Activated naive CD4-positive, alpha-beta T cell treated with anti-CD3 and anti-CD28 coated beads for 36 hours (primary cell): ENCODE measurements at regions of chr19 and their contacts with region 1.

Region 1: GRCh38 chr19:46542428-46543230 is 47.0 kb upstream of the PNMA8B start:
- DNase-seq: peak; percentile 92
- H3K4me3 Mint-ChIP-seq: no peak overlapping the region
- H3K27ac Mint-ChIP-seq: no peak overlapping the region
- H3K4me1 Mint-ChIP-seq: peaks cover 11% of the 10 kb centered on the region
- H3K27me3 Mint-ChIP-seq: no peaks in the 10 kb centered on the region

Region 2: DNA sequence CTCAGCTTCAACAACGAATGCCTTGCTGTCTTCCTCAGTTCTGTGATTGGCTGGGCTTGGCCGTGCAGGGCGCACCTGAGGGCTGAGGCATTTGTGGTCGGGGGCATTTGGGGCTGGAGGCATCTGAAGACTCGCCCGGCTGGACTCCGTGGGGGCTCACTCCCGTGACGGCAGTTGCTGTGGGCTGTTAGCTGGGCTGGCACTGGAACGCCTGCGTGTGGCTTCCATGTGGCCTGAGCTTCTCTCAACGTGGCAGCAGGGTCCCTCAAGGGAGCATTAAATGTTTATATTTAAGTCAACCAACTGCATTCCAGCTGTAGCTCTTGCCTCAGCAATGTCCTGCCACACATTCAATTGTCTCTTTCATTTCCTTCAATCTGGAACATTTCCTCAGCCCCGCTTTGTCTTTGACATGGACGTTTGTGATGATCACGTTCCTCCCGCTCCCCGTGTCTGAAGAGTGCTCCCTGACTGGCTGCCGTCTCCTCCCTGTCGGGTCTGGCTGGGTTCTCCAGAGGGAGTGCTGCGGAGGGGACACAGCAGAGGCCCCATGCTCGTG is 150.3 kb before region 1 on chr19:
- CTCF ChIA-PET with region 1: interaction called, 4 read pairs
- intact Hi-C with region 1: loop called (anchors 2 kb)
- DNase-seq: no peak
- H3K4me3 Mint-ChIP-seq: no peak overlapping the region
- H3K27ac Mint-ChIP-seq: no peak overlapping the region
- H3K4me1 Mint-ChIP-seq: peaks cover 1% of the 10 kb centered on the region
- H3K27me3 Mint-ChIP-seq: no peaks in the 10 kb centered on the region

Region 3: GRCh38 chr19:46404055-46404752 is 138.4 kb before region 1 on chr19:
- CTCF ChIA-PET with region 1: interaction called, 3 read pairs
- intact Hi-C with region 1: loop called (anchors 2 kb)
- DNase-seq: no peak
- H3K4me3 Mint-ChIP-seq: peak overlapping the region; percentile 54
- H3K27ac Mint-ChIP-seq: no peak overlapping the region
- H3K4me1 Mint-ChIP-seq: peaks cover 17% of the 10 kb centered on the region
- H3K27me3 Mint-ChIP-seq: peaks cover 63% of the 10 kb centered on the region

Region 4: DNA sequence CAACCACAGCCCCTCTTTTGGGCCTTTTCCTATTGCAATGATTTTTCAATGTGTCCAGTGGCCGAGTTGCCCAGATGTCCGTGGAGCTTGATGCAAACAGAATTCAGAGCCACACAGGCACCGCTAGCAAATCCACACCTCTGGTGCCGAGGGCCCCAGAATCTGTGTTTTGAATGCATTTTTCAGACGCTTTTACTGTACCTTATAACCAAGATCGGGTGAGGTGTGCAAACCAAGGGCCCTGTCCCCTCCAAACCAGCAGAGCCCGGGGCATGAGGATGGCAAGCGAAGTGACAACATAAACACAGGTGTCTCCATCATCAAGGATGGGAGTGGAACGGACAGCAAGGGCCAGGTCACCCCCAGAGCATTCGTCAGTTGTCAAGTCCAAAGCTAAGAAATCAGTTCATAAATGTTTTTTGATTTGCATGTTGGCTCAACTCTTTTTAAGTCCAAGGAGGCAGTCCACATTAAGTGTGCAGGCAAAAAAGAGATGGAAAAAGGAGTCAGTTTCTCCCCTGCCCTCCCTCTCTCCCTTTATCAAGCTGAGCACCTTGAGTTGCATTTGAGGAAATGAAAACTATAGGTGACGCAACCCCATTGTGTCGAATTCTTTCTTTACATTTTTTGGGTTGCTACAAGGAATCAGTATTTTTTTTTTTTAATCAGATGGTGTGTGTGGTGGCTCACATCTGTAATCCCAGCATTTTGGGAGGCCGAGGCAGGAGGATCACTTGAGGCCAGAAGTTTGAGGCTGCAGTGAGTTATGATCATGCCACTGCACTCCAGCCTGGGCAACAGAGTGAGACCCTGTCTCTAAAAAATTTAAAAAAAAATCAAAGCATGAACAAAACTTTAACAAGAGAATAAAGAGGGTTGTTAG is 132.2 kb before region 1 on chr19:
- CTCF ChIA-PET with region 1: interaction called, 10 read pairs
- intact Hi-C with region 1: no loop called
- DNase-seq: no peak
- H3K4me3 Mint-ChIP-seq: no peak overlapping the region
- H3K27ac Mint-ChIP-seq: no peak overlapping the region
- H3K4me1 Mint-ChIP-seq: peaks cover 10% of the 10 kb centered on the region
- H3K27me3 Mint-ChIP-seq: peaks cover 78% of the 10 kb centered on the region

Region 5: GRCh38 chr19:46529622-46530462 is 12.8 kb before region 1 on chr19:
- CTCF ChIA-PET with region 1: interaction called, 203 read pairs
- intact Hi-C with region 1: loop called (anchors 1 kb)
- DNase-seq: peak; percentile 84
- H3K4me3 Mint-ChIP-seq: no peak overlapping the region
- H3K27ac Mint-ChIP-seq: peak overlapping the region; percentile 30
- H3K4me1 Mint-ChIP-seq: peaks cover 27% of the 10 kb centered on the region
- H3K27me3 Mint-ChIP-seq: no peaks in the 10 kb centered on the region

Region 6: DNA sequence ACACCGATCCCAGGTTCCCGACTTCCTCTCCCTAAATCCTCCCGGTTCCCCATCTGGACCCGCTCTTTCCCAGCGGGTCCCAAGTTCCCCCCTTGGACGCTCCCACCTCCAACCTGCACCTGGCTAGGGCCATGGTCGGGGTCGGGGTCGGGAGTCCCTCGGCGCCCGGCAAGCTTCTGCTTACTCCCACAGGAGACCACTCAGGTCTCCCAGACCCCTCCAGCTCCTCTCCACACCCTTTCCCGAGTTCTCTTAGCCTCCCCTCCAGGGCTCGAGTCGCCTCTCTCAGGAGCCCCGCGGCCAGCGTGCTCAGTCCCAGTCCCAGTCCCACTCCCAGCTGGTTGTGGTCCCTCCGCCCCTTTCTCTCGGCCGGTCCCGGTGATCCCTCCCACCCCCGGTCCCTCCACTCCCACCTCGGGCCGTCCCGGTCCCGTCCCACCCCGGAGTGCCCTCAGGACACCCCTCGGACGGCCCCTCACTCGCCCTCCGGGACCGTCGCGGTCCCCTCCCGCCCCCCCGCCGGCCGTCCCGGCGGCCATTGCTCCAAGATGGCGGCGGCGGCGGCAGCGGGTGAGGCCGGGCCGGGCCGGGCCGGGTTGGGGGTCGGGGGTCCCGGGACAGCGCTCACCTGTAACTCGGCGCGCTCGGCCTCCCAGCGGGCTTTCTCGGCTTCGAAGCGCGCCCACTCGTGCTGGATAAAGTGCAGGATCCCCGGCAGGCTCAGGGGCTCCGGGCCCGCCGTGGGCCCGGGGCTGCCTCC is 203.1 kb after region 1 on chr19 and contains the start of gene FKRP:
- CTCF ChIA-PET with region 1: no interaction called
- intact Hi-C with region 1: no loop called
- DNase-seq: no peak
- H3K4me3 Mint-ChIP-seq: peak within 1 kb of the TSS; percentile 95
- H3K27ac Mint-ChIP-seq: peak within 1 kb of the TSS; percentile 84
- H3K4me1 Mint-ChIP-seq: peaks cover 46% of the 10 kb centered on the region
- H3K27me3 Mint-ChIP-seq: no peaks in the 10 kb centered on the region
- total RNA-seq, gene FKRP: 8.8 to 9.0 TPM